Esophagus muscularis mucosa (tissue), 4 donors: ENCODE measurements at regions of chr6 and their contacts with region 1.

Region 1: DNA sequence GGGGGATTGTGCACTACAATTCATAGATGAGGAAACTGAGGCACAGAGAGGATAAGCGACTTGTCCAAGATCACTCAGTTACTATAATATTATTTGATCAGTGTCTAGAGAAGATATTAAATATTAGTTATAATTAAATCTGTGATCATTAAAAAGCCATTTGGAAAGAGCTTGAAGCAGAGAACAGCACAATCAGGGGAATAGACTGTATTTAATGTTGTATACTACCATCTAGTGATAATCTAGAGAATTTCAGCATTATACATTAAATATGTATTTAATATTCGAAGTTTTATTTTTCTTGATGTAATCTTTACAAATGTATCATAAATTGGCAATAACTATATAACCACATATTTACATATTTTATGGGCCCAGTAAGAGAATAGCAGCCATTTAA is 20.1 kb upstream of the MTCL3 start:
- DNase-seq: no peak
- H3K4me3 ChIP-seq: no peak overlapping the region
- H3K27ac ChIP-seq: no peak overlapping the region
- H3K4me1 ChIP-seq: peaks cover 0 to 4% (median 2%) of the 10 kb centered on the region in 4 donors
- H3K27me3 ChIP-seq: no peaks in the 10 kb centered on the region
- CTCF ChIP-seq: peak; percentile 32 to 56 (median 49)
- EP300 ChIP-seq: no peak
- POLR2A ChIP-seq: no peak

Region 2: GRCh38 chr6:127436578-127437110 is 102.6 kb before region 1 on chr6:
- intact Hi-C with region 1: no loop called
- DNase-seq: no peak
- H3K4me3 ChIP-seq: no peak overlapping the region
- H3K27ac ChIP-seq: peak overlapping the region in 3 of 4 donors; percentile 8 to 47 (median 42)
- H3K4me1 ChIP-seq: peaks cover 0 to 25% (median 8%) of the 10 kb centered on the region in 4 donors
- H3K27me3 ChIP-seq: no peaks in the 10 kb centered on the region
- CTCF ChIP-seq: no peak
- EP300 ChIP-seq: no peak
- POLR2A ChIP-seq: no peak

Region 3: GRCh38 chr6:127464881-127465459 is 74.3 kb before region 1 on chr6:
- intact Hi-C with region 1: loop called (anchors 2 kb)
- DNase-seq: no peak
- H3K4me3 ChIP-seq: no peak overlapping the region
- H3K27ac ChIP-seq: peak overlapping the region; percentile 70 to 83 (median 76)
- H3K4me1 ChIP-seq: peaks cover 3 to 61% (median 53%) of the 10 kb centered on the region in 4 donors
- H3K27me3 ChIP-seq: no peaks in the 10 kb centered on the region
- CTCF ChIP-seq: peak; percentile 76 to 87 (median 81)
- EP300 ChIP-seq: no peak
- POLR2A ChIP-seq: no peak

Region 4: DNA sequence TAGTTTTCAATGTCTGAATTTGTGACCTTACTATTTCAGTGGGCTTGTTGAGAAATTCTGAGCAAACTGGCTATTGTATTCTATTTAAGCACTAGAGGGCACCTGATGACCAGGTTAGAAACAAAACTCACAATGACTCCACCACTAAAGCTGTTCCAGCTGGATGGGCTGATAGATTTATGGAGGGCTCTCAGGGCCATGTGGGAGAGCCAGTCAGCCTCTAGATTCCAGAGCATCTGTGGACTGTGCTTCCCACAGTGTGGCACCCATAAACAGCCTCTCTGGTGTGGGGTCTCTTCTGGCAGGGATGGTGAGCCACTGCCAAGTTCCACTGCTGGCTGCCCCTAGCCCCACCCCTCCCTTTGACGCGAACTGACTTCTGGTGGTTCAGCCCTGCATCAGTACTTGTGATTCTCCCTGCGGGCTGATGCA is 66.9 kb after region 1 on chr6:
- intact Hi-C with region 1: no loop called
- DNase-seq: no peak
- H3K4me3 ChIP-seq: no peak overlapping the region
- H3K27ac ChIP-seq: no peak overlapping the region
- H3K4me1 ChIP-seq: no peaks in the 10 kb centered on the region
- H3K27me3 ChIP-seq: no peaks in the 10 kb centered on the region
- CTCF ChIP-seq: no peak
- EP300 ChIP-seq: no peak
- POLR2A ChIP-seq: no peak